ENCODE measurements at regions of chr15 and their contacts with region 1.

Region 1: GRCh38 chr15:44971036-44971435 is 14.5 kb downstream of the TERB2 start:
- DNase-seq: no peak
- ATAC-seq: no peak
- H3K4me3 ChIP-seq: no peak overlapping the region
- H3K27ac ChIP-seq: no peak overlapping the region
- H3K4me1 ChIP-seq: peaks cover 10% of the 10 kb centered on the region; the same call in 1 of the 2 replicates
- H3K27me3 ChIP-seq: no peaks in the 10 kb centered on the region
- CTCF ChIP-seq: no peak
- EP300 ChIP-seq: no peak
- POLR2A ChIP-seq: no peak
- RAD21 ChIP-seq: no peak

Region 2: DNA sequence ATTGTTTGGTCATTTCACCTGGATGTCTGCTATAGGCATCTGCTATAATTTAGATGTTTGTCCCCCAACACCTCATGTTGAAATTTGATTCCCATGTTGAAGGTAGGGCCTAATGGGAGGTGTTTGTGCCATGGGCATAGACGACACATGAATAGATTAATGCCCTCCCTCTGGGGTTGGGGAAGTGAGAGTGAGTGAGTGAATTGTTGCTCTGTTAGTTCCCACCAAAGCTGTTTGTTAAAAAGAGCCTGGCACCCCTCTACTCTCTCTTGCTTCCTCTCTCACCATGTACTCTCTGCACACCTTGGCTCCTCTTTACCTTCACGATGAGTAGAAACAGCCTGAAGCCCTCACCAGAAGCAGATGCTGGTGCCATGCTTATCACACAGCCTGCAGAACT is 28.1 kb after region 1 on chr15:
- CTCF ChIA-PET with region 1: no interaction called
- POLR2A ChIA-PET with region 1: no interaction called
- in situ Hi-C with region 1: no loop called
- intact Hi-C with region 1: no loop called
- DNase-seq: no peak
- ATAC-seq: no peak
- H3K4me3 ChIP-seq: no peak overlapping the region
- H3K27ac ChIP-seq: no peak overlapping the region
- H3K4me1 ChIP-seq: peaks cover 33% of the 10 kb centered on the region
- H3K27me3 ChIP-seq: no peaks in the 10 kb centered on the region
- CTCF ChIP-seq: no peak
- EP300 ChIP-seq: no peak
- POLR2A ChIP-seq: no peak
- RAD21 ChIP-seq: no peak

Region 3: DNA sequence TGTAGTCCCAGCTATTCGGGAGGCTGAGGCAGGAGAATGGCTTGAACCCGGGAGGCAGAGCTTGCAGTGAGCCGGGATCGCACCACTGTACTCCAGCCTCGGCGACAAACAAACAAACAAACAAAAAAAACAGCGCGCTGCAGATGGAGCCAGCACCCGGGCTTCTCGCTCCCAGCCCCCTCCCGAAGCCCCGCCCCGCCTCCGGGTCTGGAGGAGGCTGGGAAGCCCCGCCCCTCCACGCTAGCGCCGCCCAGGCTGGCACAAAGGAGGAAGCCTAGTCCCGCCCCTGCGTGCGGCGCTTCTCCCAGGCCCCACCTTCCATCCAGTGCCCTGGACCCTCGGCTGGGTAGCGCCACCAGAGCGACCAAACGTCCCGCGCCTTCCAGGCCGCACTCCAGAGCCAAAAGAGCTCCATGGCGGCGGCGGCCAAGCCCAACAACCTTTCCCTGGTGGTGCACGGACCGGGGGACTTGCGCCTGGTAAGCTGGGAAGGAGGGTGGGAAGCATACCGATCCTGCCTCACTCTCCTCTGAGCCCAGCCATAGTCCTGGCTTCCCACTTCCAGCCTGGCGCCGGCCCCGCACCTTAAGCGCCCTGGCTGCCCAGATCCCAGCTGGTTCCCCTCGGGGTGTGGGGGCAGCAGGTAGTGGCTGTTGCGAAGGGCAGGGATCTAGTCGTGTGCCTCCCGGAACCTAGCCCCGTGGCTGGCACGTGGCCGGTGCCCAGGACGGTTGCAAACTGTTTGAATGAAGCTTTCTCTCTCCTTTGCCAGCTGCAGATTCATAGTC is 52.0 kb after region 1 on chr15 and contains the start of gene SORD:
- CTCF ChIA-PET with region 1: no interaction called
- POLR2A ChIA-PET with region 1: no interaction called
- in situ Hi-C with region 1: loop called (anchors 5 kb)
- intact Hi-C with region 1: no loop called
- DNase-seq: peak; percentile 86
- ATAC-seq: peak; percentile 96
- H3K4me3 ChIP-seq: peak within 1 kb of the TSS; percentile 82 to 93 (median 91)
- H3K27ac ChIP-seq: peak within 1 kb of the TSS; percentile 81
- H3K4me1 ChIP-seq: peaks cover 85% of the 10 kb centered on the region
- H3K27me3 ChIP-seq: no peaks in the 10 kb centered on the region; a peak in 1 of 5 replicates
- CTCF ChIP-seq: peak; percentile 46
- EP300 ChIP-seq: no peak
- POLR2A ChIP-seq: peak; percentile 87 to 96
- RAD21 ChIP-seq: no peak
- total RNA-seq, gene SORD: 59.1 and 104 TPM in 2 replicates

Region 4: GRCh38 chr15:45037936-45038335 is 66.9 kb after region 1 on chr15:
- CTCF ChIA-PET with region 1: interaction called, 9 read pairs
- POLR2A ChIA-PET with region 1: no interaction called
- in situ Hi-C with region 1: no loop called
- intact Hi-C with region 1: loop called (anchors 2 kb)
- DNase-seq: no peak
- ATAC-seq: no peak
- H3K4me3 ChIP-seq: no peak overlapping the region
- H3K27ac ChIP-seq: no peak overlapping the region
- H3K4me1 ChIP-seq: peaks cover 31% of the 10 kb centered on the region
- H3K27me3 ChIP-seq: no peaks in the 10 kb centered on the region
- CTCF ChIP-seq: no peak
- EP300 ChIP-seq: no peak
- POLR2A ChIP-seq: no peak
- RAD21 ChIP-seq: no peak

Region 5: GRCh38 chr15:45118131-45118588 is 147.1 kb after region 1 on chr15:
- CTCF ChIA-PET with region 1: no interaction called
- POLR2A ChIA-PET with region 1: no interaction called
- in situ Hi-C with region 1: loop called (anchors 10 kb)
- intact Hi-C with region 1: loop called (anchors 1 kb)
- DNase-seq: peak; percentile 85
- ATAC-seq: peak; percentile 95
- H3K4me3 ChIP-seq: peak overlapping the region in 1 of 3 experiments; percentile 47; a peak in 3 of 6 replicates
- H3K27ac ChIP-seq: no peak overlapping the region
- H3K4me1 ChIP-seq: peaks cover 25% of the 10 kb centered on the region
- H3K27me3 ChIP-seq: peaks cover 5 to 36% of the 10 kb centered on the region in 2 experiments
- CTCF ChIP-seq: peak; percentile 99
- EP300 ChIP-seq: peak in 1 of 2 experiments; percentile 12; a peak in 1 of 4 replicates
- POLR2A ChIP-seq: no peak
- RAD21 ChIP-seq: peak; percentile 85

Region 6: DNA sequence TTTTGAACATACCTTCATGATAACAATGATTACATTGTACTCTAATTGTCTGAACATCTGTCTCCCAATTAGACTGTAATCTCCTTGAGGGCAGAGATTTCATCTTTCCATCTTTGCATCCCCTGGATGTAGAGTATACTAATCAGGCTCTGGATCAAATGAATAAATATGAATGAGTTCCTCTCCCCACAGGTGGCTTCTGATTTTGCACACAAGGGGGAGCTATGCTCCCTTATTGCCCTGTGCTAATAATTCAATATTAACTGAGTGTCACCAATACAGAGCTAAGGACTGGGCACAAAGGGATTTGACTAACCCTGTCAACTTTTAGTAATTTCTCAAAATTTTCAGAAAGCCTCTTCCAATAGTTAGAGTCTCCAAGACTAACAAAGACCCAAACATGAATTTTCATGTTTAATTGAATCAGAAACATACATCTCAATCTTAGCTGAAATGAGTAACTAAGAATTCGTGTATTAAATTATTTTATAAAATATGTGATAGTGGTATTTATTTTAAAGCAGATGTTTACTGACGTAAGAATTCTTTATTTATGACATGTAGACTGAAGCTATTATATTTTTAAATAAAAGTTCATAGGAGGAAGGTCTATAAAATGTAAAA is 155.6 kb after region 1 on chr15:
- CTCF ChIA-PET with region 1: no interaction called
- POLR2A ChIA-PET with region 1: no interaction called
- in situ Hi-C with region 1: loop called (anchors 10 kb)
- intact Hi-C with region 1: no loop called
- DNase-seq: peak; percentile 25
- ATAC-seq: peak; percentile 54
- H3K4me3 ChIP-seq: no peak overlapping the region
- H3K27ac ChIP-seq: no peak overlapping the region
- H3K4me1 ChIP-seq: peaks cover 14% of the 10 kb centered on the region
- H3K27me3 ChIP-seq: peaks cover 0 to 3% of the 10 kb centered on the region in 2 experiments; a peak in 2 of 5 replicates
- CTCF ChIP-seq: peak; percentile 55
- EP300 ChIP-seq: no peak
- POLR2A ChIP-seq: no peak
- RAD21 ChIP-seq: 0 out of 2 replicates have a peak, but pooled peaks have one; percentile 23

Region 7: DNA sequence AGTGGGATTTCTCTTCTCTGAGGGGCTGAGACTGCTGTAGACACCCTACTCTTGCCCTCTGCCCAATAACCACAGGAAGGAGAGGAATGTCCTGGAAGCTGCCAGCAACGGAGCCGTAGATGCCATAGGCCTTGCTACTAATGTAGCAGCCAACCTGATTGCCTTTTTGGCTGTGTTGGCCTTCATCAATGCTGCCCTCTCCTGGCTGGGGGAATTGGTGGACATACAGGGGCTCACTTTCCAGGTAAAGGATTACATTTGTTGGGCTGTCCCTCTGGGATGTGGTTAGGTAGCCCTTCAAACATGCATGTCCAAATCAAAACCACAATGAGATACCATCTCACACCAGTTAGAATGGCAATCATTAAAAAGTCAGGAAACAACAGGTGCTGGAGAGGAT is 297.1 kb after region 1 on chr15:
- CTCF ChIA-PET with region 1: no interaction called
- POLR2A ChIA-PET with region 1: no interaction called
- in situ Hi-C with region 1: no loop called
- intact Hi-C with region 1: loop called (anchors 10 kb)
- DNase-seq: peak; percentile 30
- ATAC-seq: peak; percentile 77
- H3K4me3 ChIP-seq: no peak overlapping the region
- H3K27ac ChIP-seq: no peak overlapping the region
- H3K4me1 ChIP-seq: peaks cover 10% of the 10 kb centered on the region
- H3K27me3 ChIP-seq: no peaks in the 10 kb centered on the region
- CTCF ChIP-seq: peak; percentile 66
- EP300 ChIP-seq: no peak
- POLR2A ChIP-seq: no peak
- RAD21 ChIP-seq: peak; percentile 29; the same call in 1 of the 2 replicates